T-cell (primary cell): ENCODE measurements at regions of chrX and their contacts with region 1.

Region 1: DNA sequence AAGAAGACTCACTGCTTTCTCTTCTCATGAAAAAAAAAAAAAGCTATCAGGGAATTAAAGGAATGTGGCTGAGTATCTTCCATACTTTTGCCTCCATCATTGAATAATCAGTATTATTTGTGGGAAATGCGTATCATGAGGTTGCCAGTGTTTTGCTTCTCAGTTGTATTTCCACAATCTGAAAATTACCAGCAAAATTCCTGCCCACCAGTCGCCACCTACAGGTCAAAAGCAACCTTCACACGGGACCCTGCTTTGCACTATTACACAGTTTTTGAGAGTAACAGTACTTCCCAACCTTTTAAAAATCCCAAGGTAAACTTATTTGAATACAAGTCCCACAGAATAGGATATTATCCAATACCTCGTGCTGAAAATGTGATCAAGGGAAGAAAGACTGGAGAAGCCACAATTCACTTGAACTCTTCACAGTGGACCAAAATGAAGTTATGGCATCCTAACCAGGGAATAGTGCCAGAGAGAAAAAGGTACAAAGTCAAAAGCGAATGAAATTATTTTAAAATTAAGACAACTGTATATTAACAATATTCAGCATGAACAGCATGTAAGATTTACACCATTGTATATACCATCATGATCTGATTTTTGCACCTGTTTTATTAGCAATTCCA is 30.4 kb downstream of the PGRMC1 start:
- DNase-seq: peak in 12 of 35 experiments; percentile 0 to 48 (median 12)
- ATAC-seq: no peak
- H3K4me3 ChIP-seq: no peak overlapping the region
- H3K4me3 Mint-ChIP-seq: no peak overlapping the region
- H3K27ac ChIP-seq: no peak overlapping the region
- H3K27ac Mint-ChIP-seq: no peak overlapping the region
- H3K4me1 ChIP-seq: no peaks in the 10 kb centered on the region
- H3K4me1 Mint-ChIP-seq: no peaks in the 10 kb centered on the region
- H3K27me3 ChIP-seq: no peaks in the 10 kb centered on the region
- H3K27me3 Mint-ChIP-seq: peaks cover 2 to 40% of the 10 kb centered on the region in 2 donors

Region 2: DNA sequence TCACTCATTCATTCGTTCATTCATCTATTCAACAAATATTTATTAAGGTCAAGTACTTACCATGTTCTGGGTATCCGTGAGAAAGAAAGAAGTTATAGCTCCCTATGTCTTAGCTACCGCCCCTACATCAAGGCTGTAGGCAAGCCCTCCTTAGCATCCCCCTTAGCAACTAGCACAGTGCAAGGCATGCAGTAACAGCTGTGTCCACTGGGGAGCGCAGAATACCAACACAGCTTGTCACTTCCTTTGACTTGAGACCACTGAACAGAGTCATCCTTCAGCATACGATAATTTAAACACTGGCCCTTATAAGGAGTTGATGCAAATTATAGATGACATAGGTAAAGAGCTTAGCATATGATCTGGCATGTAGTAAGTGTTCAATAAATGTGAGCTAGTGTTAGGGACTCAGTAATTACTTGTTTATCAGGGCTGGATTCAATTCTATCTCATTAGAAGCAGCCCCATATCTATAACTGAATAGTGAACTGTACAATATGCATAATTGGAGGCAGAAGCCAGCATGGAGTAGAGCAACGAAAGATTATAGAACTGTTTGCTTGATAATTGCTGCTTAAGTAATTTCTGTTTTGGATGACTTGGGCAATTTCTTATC is 147.6 kb before region 1 on chrX:
- CTCF ChIA-PET with region 1: interaction called, 13 to 16 read pairs
- POLR2A ChIA-PET with region 1: no interaction called
- DNase-seq: peak in 33 of 35 experiments; percentile 3 to 63 (median 28)
- ATAC-seq: peak; percentile 60 to 75 (median 64)
- H3K4me3 ChIP-seq: no peak overlapping the region
- H3K4me3 Mint-ChIP-seq: no peak overlapping the region
- H3K27ac ChIP-seq: no peak overlapping the region
- H3K27ac Mint-ChIP-seq: no peak overlapping the region
- H3K4me1 ChIP-seq: no peaks in the 10 kb centered on the region
- H3K4me1 Mint-ChIP-seq: no peaks in the 10 kb centered on the region
- H3K27me3 ChIP-seq: no peaks in the 10 kb centered on the region
- H3K27me3 Mint-ChIP-seq: peaks cover 6 to 36% of the 10 kb centered on the region in 2 donors

Region 3: GRCh38 chrX:119130911-119131310 is 135.6 kb before region 1 on chrX:
- CTCF ChIA-PET with region 1: no interaction called
- POLR2A ChIA-PET with region 1: no interaction called
- DNase-seq: no peak
- ATAC-seq: no peak
- H3K4me3 ChIP-seq: no peak overlapping the region
- H3K4me3 Mint-ChIP-seq: no peak overlapping the region
- H3K27ac ChIP-seq: no peak overlapping the region
- H3K27ac Mint-ChIP-seq: no peak overlapping the region
- H3K4me1 ChIP-seq: no peaks in the 10 kb centered on the region
- H3K4me1 Mint-ChIP-seq: no peaks in the 10 kb centered on the region
- H3K27me3 ChIP-seq: no peaks in the 10 kb centered on the region
- H3K27me3 Mint-ChIP-seq: peaks cover 5 to 25% of the 10 kb centered on the region in 2 donors